Mammary epithelial cell (primary cell): ENCODE measurements at regions of chr11 and their contacts with region 1.

Region 1: GRCh38 chr11:10181811-10182210 is 112.2 kb downstream of the SBF2 start:
- DNase-seq: no peak
- H3K4me3 ChIP-seq: no peak overlapping the region
- H3K27ac ChIP-seq: no peak overlapping the region
- H3K4me1 ChIP-seq: no peaks in the 10 kb centered on the region
- H3K27me3 ChIP-seq: no peaks in the 10 kb centered on the region
- CTCF ChIP-seq: peak; percentile 24 to 26

Region 2: GRCh38 chr11:10139656-10140055 is 42.2 kb before region 1 on chr11:
- CTCF ChIA-PET with region 1: interaction called, 15 read pairs
- dilution Hi-C with region 1: no loop called
- in situ Hi-C with region 1: no loop called
- intact Hi-C with region 1: no loop called
- DNase-seq: peak; percentile 75
- H3K4me3 ChIP-seq: no peak overlapping the region
- H3K27ac ChIP-seq: peak overlapping the region; percentile 64
- H3K4me1 ChIP-seq: peaks cover 15% of the 10 kb centered on the region
- H3K27me3 ChIP-seq: no peaks in the 10 kb centered on the region
- CTCF ChIP-seq: no peak

Region 3: DNA sequence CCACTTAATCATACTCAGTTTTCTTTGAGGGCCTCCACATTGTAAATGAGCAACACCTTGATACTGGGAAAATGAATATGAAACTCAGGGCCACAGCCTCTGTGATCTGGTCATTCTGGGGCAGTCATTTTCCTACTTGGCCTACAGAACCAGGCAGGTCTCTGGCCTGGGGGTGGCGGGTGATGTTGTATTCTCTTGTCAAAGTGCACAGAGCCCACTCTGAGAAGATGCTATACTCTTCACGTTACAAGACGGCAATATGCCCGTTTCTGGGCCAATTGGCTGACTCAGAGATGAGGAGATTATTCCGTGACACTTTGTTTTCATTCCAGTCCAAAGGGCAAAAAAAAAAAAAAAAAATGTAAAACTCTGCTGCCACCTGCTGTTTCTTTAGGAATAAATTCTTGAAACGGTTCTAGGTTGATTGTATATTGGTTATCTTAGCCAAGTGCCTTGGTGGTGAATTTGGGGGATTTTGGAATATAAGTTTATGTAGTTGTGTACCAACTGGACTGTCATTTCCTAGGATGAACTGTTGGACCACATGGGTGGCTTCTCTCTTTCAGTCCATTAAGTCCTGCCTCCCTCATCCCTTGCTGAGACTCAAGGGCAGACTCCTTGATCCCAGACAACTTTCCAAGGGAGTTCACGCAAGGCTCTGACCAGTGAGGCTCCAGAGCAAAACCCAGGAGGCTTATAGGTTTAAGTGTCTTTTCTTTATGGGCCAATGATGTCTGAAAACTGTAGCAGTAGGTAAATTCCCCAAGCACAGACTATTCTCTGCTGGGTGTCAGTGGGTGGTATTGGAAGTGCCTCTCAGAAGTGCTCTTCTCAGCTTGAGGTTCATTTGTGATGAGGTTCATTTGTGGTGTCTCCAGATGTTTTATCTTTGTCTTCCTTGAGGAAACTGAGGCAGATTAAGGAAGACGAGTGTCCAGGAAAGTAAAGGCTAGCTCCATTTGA is 141.3 kb after region 1 on chr11:
- CTCF ChIA-PET with region 1: no interaction called
- dilution Hi-C with region 1: no loop called
- in situ Hi-C with region 1: no loop called
- intact Hi-C with region 1: loop called (anchors 1 kb)
- DNase-seq: peak; percentile 84
- H3K4me3 ChIP-seq: no peak overlapping the region
- H3K27ac ChIP-seq: peak overlapping the region; percentile 57
- H3K4me1 ChIP-seq: peaks cover 6% of the 10 kb centered on the region
- H3K27me3 ChIP-seq: no peaks in the 10 kb centered on the region
- CTCF ChIP-seq: peak; percentile 42 to 49

Region 4: DNA sequence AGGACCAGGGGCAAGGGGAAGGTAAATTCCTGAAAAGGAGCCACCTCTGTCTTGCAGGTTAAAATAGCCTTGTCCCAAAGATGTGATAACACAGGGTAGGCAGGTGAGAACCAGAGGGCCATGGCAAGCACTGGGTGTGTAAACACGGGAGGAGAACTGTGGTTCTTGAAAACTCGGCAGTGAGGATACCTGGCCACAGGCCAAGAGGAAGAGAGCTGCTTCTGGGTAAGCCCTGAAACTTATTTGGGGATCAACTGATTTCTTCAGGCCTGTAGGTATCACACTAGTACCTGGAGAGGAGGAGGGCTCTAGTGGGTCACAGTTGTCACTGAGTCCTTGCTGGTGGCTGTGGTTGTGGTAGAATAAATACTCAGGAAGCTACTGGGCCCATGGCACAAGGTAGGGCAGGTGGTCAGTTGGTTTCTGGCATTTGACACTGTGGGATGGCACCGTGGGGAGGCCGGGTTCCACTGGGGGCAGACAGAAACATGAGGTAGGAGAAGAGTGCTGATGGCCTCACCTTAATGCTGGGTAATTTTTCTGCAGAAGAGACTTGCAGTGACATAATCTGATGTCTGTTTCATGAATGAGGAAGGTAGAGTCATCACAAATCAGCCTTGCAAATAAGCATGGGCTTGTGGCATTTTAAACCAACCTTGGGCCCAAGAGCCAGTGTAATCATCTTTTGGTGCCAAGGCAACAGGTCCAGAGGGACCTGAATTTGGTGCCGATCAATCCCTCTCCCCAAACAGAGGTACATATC is 295.3 kb after region 1 on chr11:
- CTCF ChIA-PET with region 1: interaction called, 10 read pairs
- dilution Hi-C with region 1: no loop called
- in situ Hi-C with region 1: no loop called
- intact Hi-C with region 1: no loop called
- DNase-seq: no peak
- H3K4me3 ChIP-seq: no peak overlapping the region
- H3K27ac ChIP-seq: no peak overlapping the region
- H3K4me1 ChIP-seq: no peaks in the 10 kb centered on the region
- H3K27me3 ChIP-seq: no peaks in the 10 kb centered on the region
- CTCF ChIP-seq: no peak